PC-9 (cell line): ENCODE measurements at regions of chr11 and their contacts with region 1.

Region 1: DNA sequence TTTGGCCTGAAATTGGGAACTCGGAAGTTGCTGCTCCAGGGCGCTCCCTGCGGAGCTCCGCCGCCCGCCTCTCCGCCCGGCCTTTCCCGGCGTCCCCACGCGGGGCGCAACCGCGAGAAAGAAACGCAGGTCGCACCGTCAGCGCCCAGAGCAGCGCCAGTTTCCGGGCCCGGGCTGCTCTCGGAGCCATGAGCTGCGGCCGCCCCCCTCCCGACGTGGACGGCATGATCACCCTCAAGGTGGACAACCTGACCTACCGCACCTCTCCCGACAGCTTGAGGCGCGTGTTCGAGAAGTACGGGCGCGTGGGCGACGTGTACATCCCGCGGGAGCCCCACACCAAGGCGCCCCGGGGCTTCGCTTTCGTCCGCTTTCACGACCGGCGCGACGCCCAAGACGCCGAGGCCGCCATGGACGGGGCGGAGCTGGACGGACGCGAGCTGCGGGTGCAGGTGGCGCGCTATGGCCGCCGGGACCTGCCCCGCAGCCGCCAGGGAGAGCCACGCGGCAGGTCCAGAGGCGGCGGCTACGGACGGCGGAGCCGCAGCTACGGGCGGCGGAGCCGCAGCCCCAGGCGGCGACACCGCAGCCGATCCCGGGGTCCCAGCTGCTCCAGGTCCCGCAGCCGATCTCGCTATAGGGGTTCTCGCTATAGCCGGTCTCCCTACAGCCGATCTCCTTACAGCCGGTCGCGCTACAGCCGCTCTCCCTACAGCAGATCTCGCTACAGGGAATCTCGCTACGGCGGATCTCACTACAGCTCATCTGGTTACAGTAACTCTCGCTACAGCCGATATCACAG is 521 bp downstream of the SRSF8 start:
- DNase-seq: peak; percentile 68 to 72
- H3K4me3 ChIP-seq: peak overlapping the region; percentile 89
- H3K27ac ChIP-seq: peak overlapping the region; percentile 85
- H3K4me1 ChIP-seq: peaks cover 20% of the 10 kb centered on the region
- H3K27me3 ChIP-seq: no peaks in the 10 kb centered on the region
- CTCF ChIP-seq: peak; percentile 53

Region 2: GRCh38 chr11:94973099-94973968 is 93.9 kb before region 1 on chr11 and contains the starts of genes CWC15 and KDM4D:
- CTCF ChIA-PET with region 1: no interaction called
- POLR2A ChIA-PET with region 1: interaction called, 4 read pairs
- intact Hi-C with region 1: loop called (anchors 5 kb)
- DNase-seq: peak; percentile 88 to 91
- H3K4me3 ChIP-seq: peak within 1 kb of the TSS; percentile 76
- H3K27ac ChIP-seq: peak within 1 kb of the TSS; percentile 44
- H3K4me1 ChIP-seq: peaks cover 11% of the 10 kb centered on the region
- H3K27me3 ChIP-seq: no peaks in the 10 kb centered on the region
- CTCF ChIP-seq: no peak
- total RNA-seq, gene CWC15: 50.9 and 54.2 TPM in 2 replicates
- total RNA-seq, gene KDM4D: 0.85 and 1.1 TPM in 2 replicates

Region 3: GRCh38 chr11:95108159-95108611 is 40.9 kb after region 1 on chr11:
- CTCF ChIA-PET with region 1: interaction called, 3 read pairs
- POLR2A ChIA-PET with region 1: no interaction called
- intact Hi-C with region 1: loop called (anchors 5 kb)
- DNase-seq: peak; percentile 62 to 91
- H3K4me3 ChIP-seq: peak overlapping the region; percentile 58
- H3K27ac ChIP-seq: peak overlapping the region; percentile 92
- H3K4me1 ChIP-seq: peaks cover 34% of the 10 kb centered on the region
- H3K27me3 ChIP-seq: no peaks in the 10 kb centered on the region
- CTCF ChIP-seq: 0 out of 2 replicates have a peak, but pooled peaks have one; percentile 9

Region 4: GRCh38 chr11:95764267-95764898 is 697.1 kb after region 1 on chr11:
- CTCF ChIA-PET with region 1: no interaction called
- POLR2A ChIA-PET with region 1: no interaction called
- intact Hi-C with region 1: loop called (anchors 5 kb)
- DNase-seq: peak in 1 of 2 experiments; percentile 59
- H3K4me3 ChIP-seq: no peak overlapping the region
- H3K27ac ChIP-seq: no peak overlapping the region
- H3K4me1 ChIP-seq: peaks cover 8% of the 10 kb centered on the region; the same call in 1 of the 2 replicates
- H3K27me3 ChIP-seq: no peaks in the 10 kb centered on the region
- CTCF ChIP-seq: peak; percentile 93